ENCODE measurements at regions of chr2 and their contacts with region 1.

Region 1: GRCh38 chr2:17719562-17720371 is 33.8 kb downstream of the SMC6 start:
- DNase-seq: peak in 1 of 5 donors; percentile 7
- H3K4me3 ChIP-seq: no peak overlapping the region
- H3K4me3 Mint-ChIP-seq: no peak overlapping the region
- H3K27ac ChIP-seq: no peak overlapping the region
- H3K27ac Mint-ChIP-seq: peak overlapping the region in 3 of 8 donors; percentile 9 to 38 (median 23)
- H3K4me1 ChIP-seq: no peaks in the 10 kb centered on the region
- H3K4me1 Mint-ChIP-seq: no peaks in the 10 kb centered on the region
- H3K27me3 ChIP-seq: no peaks in the 10 kb centered on the region
- H3K27me3 Mint-ChIP-seq: no peaks in the 10 kb centered on the region

Region 2: GRCh38 chr2:18178736-18179349 is 459.1 kb after region 1 on chr2:
- CTCF ChIA-PET with region 1: interaction called, 13 read pairs
- POLR2A ChIA-PET with region 1: no interaction called
- DNase-seq: peak in 1 of 5 donors; percentile 3
- H3K4me3 ChIP-seq: no peak overlapping the region
- H3K4me3 Mint-ChIP-seq: no peak overlapping the region
- H3K27ac ChIP-seq: no peak overlapping the region
- H3K27ac Mint-ChIP-seq: no peak overlapping the region
- H3K4me1 ChIP-seq: no peaks in the 10 kb centered on the region
- H3K4me1 Mint-ChIP-seq: no peaks in the 10 kb centered on the region
- H3K27me3 ChIP-seq: no peaks in the 10 kb centered on the region
- H3K27me3 Mint-ChIP-seq: peaks cover 3% of the 10 kb centered on the region in 2 donors